ENCODE measurements at regions of chr4 and their contacts with region 1.

Region 1: DNA sequence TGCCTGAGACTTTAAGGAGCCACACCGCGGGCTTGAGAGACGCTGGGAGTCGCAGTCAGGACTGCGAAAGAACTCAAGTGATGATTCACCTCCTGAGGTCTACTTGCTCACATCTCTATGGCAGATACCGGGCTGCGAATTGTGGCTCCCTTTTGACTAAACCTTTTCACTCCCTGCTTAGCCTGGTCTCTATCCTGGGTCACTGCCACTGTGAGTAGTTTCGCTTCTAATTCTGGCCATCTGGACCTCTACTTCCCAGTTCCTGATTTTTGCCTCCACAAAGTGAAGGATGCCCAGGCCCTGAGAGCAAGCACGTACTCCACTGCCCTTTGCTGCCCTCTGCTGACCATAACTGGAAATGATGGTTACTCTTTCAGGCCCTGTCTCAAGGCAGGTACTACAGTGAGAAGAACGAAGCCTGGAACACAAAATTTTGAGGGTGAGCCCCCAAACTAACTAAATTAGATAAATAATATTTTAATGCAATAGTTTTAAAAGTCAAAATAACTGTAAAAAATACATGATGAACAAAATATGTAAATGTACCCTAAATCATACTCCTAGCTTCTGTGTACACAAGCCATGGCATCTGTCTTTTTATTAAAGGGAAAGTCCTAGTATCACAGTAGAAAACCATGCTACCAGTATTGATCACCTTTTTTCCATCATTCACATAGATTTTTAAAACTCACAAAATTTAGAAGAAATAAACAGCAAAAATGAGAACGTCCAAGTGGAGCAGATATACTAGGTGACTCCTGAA is 16.7 kb downstream of the MAD2L1 start:
- DNase-seq: peak; percentile 85
- H3K4me3 ChIP-seq: peak overlapping the region in 2 of 4 donors; percentile 8 to 36
- H3K27ac ChIP-seq: peak overlapping the region; percentile 64 to 80 (median 70)
- H3K4me1 ChIP-seq: peaks cover 0 to 6% (median 0%) of the 10 kb centered on the region in 4 donors
- H3K27me3 ChIP-seq: no peaks in the 10 kb centered on the region
- CTCF ChIP-seq: peak; percentile 79 to 90 (median 87)
- EP300 ChIP-seq: no peak
- POLR2A ChIP-seq: no peak

Region 2: DNA sequence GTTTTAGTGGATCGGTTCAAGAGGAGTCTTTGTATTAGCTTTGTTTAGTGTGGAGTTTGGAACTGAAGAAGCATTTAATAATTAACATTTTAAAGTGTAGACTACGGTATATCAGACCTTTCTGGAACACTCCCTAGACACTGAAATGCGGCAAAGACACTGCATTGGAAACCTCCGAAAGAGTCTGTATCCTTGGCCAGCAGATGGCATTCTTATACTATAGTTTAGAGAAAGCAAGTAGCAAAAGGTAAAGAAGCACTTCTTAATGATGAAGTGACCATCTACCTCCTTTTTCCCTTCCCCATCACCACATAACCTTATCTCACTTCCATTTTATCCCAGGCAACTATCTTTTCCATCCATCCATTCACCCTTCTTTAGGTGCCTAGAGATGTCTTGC is 735.6 kb before region 1 on chr4:
- in situ Hi-C with region 1: loop called in 1 of 4 experiments (anchors 10 kb)
- intact Hi-C with region 1: no loop called
- DNase-seq: peak; percentile 24
- H3K4me3 ChIP-seq: no peak overlapping the region
- H3K27ac ChIP-seq: no peak overlapping the region
- H3K4me1 ChIP-seq: no peaks in the 10 kb centered on the region
- H3K27me3 ChIP-seq: no peaks in the 10 kb centered on the region
- CTCF ChIP-seq: peak; percentile 29 to 39 (median 37)
- EP300 ChIP-seq: no peak
- POLR2A ChIP-seq: no peak

Region 3: DNA sequence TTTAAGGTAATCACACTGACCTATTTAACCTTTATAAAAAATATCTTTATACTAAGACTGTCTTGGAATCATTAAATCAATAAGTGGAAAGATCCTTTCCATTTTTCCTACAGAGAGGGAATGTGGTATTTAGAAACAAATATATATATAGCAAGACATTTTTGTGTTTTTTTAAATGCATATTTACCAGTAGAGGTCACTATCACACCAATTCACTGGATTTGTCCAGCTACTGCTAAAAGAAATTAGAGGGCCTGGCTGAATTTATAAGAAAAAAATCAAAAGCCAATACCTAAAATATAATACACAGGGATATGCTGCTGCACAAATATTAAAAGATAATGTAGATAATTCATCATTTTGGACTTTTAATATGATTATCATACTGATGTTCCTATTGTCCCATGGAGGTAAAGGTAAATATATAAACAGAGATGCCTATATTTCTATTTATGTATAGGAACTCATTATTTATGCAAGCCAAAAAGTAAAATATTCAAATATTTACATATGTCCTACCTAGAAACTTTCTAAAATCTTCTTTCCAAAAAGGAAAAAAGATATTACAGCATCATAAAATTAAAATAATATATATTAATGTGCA is 490.8 kb before region 1 on chr4:
- in situ Hi-C with region 1: loop called in 3 of 4 experiments (anchors 10 to 25 kb)
- intact Hi-C with region 1: loop called (anchors 5 kb)
- DNase-seq: no peak
- H3K4me3 ChIP-seq: no peak overlapping the region
- H3K27ac ChIP-seq: no peak overlapping the region
- H3K4me1 ChIP-seq: no peaks in the 10 kb centered on the region
- H3K27me3 ChIP-seq: no peaks in the 10 kb centered on the region
- CTCF ChIP-seq: peak; percentile 47 to 63 (median 58)
- EP300 ChIP-seq: no peak
- POLR2A ChIP-seq: no peak

Region 4: GRCh38 chr4:119628308-119629141 is 421.4 kb before region 1 on chr4 and contains the start of gene PDE5A:
- in situ Hi-C with region 1: loop called in 3 of 4 experiments (anchors 5 to 10 kb)
- intact Hi-C with region 1: loop called (anchors 2 kb)
- DNase-seq: peak; percentile 90
- H3K4me3 ChIP-seq: peak within 1 kb of the TSS; percentile 49 to 90 (median 78)
- H3K27ac ChIP-seq: peak within 1 kb of the TSS; percentile 93 to 96 (median 94)
- H3K4me1 ChIP-seq: peaks cover 10 to 35% (median 19%) of the 10 kb centered on the region in 4 donors
- H3K27me3 ChIP-seq: no peaks in the 10 kb centered on the region
- CTCF ChIP-seq: peak; percentile 75 to 94 (median 80)
- EP300 ChIP-seq: no peak
- POLR2A ChIP-seq: peak; percentile 71
- total RNA-seq, gene PDE5A: 34.6 to 52.7 (median 46.4) TPM

Region 5: GRCh38 chr4:119785963-119786362 is 263.9 kb before region 1 on chr4:
- in situ Hi-C with region 1: loop called in 1 of 4 experiments (anchors 25 kb)
- intact Hi-C with region 1: no loop called
- DNase-seq: peak; percentile 34
- H3K4me3 ChIP-seq: no peak overlapping the region
- H3K27ac ChIP-seq: no peak overlapping the region
- H3K4me1 ChIP-seq: no peaks in the 10 kb centered on the region
- H3K27me3 ChIP-seq: no peaks in the 10 kb centered on the region
- CTCF ChIP-seq: peak; percentile 37 to 66 (median 38)
- EP300 ChIP-seq: no peak
- POLR2A ChIP-seq: no peak